Heart left ventricle (tissue), 16 donors: ENCODE measurements at regions of chr7 and their contacts with region 1.

Region 1: DNA sequence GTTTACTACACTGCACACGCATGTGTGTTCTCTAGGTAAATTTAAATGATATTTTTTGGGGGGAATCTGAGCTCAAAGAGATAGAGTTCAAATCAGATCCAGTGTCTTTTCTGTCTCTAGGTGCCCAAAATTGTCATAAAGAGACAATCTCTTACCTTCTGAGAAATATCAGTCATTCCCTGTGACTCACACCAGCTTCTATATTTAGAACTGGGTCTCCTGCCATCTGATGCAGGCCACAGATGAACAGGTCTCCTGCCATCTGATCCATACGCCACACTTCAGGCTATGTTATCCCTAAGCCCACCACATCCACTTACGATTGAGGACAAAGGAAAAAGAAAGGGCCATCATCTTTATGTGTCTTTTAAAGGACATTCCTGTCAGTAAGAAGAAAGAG is 136.3 kb upstream of the LAMB4 start:
- DNase-seq: no peak
- ATAC-seq: no peak
- H3K4me3 ChIP-seq: no peak overlapping the region
- H3K27ac ChIP-seq: no peak overlapping the region
- H3K4me1 ChIP-seq: no peaks in the 10 kb centered on the region
- H3K27me3 ChIP-seq: no peaks in the 10 kb centered on the region
- CTCF ChIP-seq: no peak
- POLR2A ChIP-seq: no peak

Region 2: GRCh38 chr7:108211382-108212201 is 54.9 kb before region 1 on chr7:
- intact Hi-C with region 1: loop called in 1 of 10 experiments (anchors 5 kb)
- DNase-seq: peak in 1 of 5 donors; percentile 12
- ATAC-seq: no peak
- H3K4me3 ChIP-seq: no peak overlapping the region
- H3K27ac ChIP-seq: no peak overlapping the region
- H3K4me1 ChIP-seq: no peaks in the 10 kb centered on the region
- H3K27me3 ChIP-seq: no peaks in the 10 kb centered on the region
- CTCF ChIP-seq: no peak
- POLR2A ChIP-seq: no peak